WTC11 (cell line): ENCODE measurements at regions of chr5 and their contacts with region 1.

Region 1: DNA sequence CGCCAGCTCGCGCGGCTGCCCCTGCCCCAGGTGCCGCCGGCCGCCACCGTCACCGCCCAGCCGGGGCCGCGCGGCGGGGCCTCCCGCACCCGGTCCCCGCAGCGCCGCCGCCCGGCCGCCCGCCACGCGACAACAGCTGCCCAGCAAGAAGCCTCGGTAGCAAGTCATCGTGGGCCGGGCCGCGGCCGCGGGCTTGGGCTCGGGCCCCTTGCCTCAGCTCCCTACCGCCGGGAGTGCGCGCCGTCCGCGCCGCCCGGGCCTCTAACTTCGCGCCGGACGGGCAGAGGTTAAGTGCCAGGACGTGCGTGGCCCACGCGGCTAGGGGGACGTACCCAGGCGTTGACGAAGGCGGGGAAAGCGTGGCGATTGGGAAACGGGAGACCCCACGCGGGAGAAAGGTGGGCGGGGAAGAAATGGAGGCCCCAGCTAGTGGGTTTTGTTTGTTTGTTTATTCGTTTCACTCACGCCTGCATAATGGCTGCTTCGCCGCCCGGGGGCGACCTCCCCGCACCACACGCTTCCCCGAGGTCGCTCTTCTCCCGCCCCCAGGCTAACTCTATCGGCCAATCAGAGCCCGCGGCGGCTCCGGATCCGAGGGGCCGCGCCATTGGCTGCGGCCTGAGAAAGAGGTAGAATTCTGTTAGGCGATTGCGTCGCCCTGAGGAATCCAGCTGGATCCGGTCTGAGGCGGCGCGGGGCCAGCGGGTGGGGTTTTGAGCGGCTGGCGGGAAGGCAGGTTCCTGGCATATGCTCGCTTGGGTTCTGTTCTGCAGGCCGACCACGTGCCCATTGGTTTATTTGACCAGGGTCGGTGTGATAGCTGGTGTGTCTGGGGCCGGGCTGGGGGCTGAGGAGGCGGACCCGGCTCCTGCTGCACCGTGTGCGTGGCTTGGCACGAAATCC is at the start of gene NADK2:
- DNase-seq: peak; percentile 96
- ATAC-seq: peak; percentile 90
- H3K4me3 Mint-ChIP-seq: peak within 1 kb of the TSS; percentile 77
- H3K27ac Mint-ChIP-seq: peak within 1 kb of the TSS; percentile 96
- H3K4me1 Mint-ChIP-seq: peaks cover 25% of the 10 kb centered on the region
- H3K27me3 Mint-ChIP-seq: peaks cover 30% of the 10 kb centered on the region
- CTCF ChIP-seq: peak; percentile 51
- total RNA-seq, gene NADK2: 11.7 to 18.2 TPM (median 17.0 TPM) in 3 replicates

Region 2: GRCh38 chr5:36230151-36230793 is 11.6 kb before region 1 on chr5:
- CTCF ChIA-PET with region 1: interaction called, 16 read pairs
- POLR2A ChIA-PET with region 1: interaction called, 3 read pairs
- DNase-seq: no peak
- ATAC-seq: no peak
- H3K4me3 Mint-ChIP-seq: no peak overlapping the region
- H3K27ac Mint-ChIP-seq: peak overlapping the region; percentile 1; the same call in 1 of the 2 replicates
- H3K4me1 Mint-ChIP-seq: peaks cover 5% of the 10 kb centered on the region
- H3K27me3 Mint-ChIP-seq: no peaks in the 10 kb centered on the region
- CTCF ChIP-seq: no peak

Region 3: GRCh38 chr5:36695677-36696673 is 454.1 kb after region 1 on chr5:
- CTCF ChIA-PET with region 1: interaction called, 10 read pairs
- POLR2A ChIA-PET with region 1: no interaction called
- DNase-seq: peak; percentile 79
- ATAC-seq: peak; percentile 75
- H3K4me3 Mint-ChIP-seq: no peak overlapping the region
- H3K27ac Mint-ChIP-seq: no peak overlapping the region
- H3K4me1 Mint-ChIP-seq: peaks cover 12% of the 10 kb centered on the region
- H3K27me3 Mint-ChIP-seq: peaks cover 44% of the 10 kb centered on the region
- CTCF ChIP-seq: peak; percentile 68